Dorsolateral prefrontal cortex (tissue), 120 donors: ENCODE measurements at regions of chr10 and their contacts with region 1.

Region 1: DNA sequence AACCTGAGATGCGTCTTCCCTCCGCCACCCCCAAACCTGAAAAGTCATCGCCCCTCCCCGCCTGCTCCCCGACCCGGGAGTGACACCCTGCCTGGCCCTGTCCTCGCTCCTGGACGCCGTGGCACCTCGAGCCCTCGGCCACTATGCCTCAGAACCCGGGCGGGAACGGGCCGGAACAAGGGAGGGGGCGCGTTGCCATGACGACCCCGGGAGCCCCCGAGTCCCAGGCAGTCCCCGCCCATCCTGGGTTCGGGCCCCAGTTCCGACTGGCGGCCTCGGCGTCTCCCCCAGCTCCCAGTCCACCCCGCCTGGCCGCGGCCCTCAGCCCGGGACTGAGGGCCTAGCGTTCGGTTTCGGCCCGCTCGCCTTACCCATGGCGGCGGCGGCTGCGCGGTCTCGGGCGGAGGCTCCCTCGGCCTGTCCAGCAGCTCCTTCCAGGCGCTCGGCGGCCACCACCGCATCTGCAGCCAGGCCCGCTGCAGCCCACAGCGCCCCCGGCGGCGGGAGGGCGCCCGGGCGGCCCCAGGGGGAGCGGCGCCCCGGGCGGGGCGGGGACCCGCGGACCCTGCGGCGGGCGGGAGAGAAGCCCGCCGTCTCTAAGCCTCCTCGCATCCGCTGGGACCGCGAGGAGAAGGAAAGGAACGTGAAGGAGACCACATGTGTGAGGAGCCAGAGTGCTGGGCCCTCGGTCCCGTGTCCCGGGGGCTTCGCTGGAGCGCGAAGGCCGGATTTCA is at the start of gene RUFY2:
- DNase-seq: peak; percentile 60 to 88 (median 76)
- H3K4me3 ChIP-seq: peak within 1 kb of the TSS; percentile 67 to 99 (median 95)
- H3K27ac ChIP-seq: peak within 1 kb of the TSS; percentile 77 to 99 (median 97)
- H3K27me3 ChIP-seq: no peaks in the 10 kb centered on the region
- CTCF ChIP-seq: peak in 53 of 56 donors; percentile 5 to 97 (median 62)
- total RNA-seq, gene RUFY2: 64.5 to 128 (median 91.0) TPM

Region 2: GRCh38 chr10:67936416-67936815 is 470.6 kb before region 1 on chr10:
- intact Hi-C with region 1: no loop called
- DNase-seq: no peak
- H3K4me3 ChIP-seq: no peak overlapping the region
- H3K27ac ChIP-seq: no peak overlapping the region
- H3K27me3 ChIP-seq: no peaks in the 10 kb centered on the region
- CTCF ChIP-seq: no peak

Region 3: GRCh38 chr10:68231106-68231816 is 175.7 kb before region 1 on chr10:
- intact Hi-C with region 1: loop called in 1 of 2 experiments (anchors 2 kb)
- DNase-seq: peak; percentile 58 to 86 (median 70)
- H3K4me3 ChIP-seq: peak overlapping the region; percentile 54 to 91 (median 77)
- H3K27ac ChIP-seq: peak overlapping the region; percentile 50 to 94 (median 87)
- H3K27me3 ChIP-seq: no peaks in the 10 kb centered on the region
- CTCF ChIP-seq: peak in 40 of 56 donors; percentile 12 to 61 (median 36)

Region 4: GRCh38 chr10:68526626-68527307 is 119.8 kb after region 1 on chr10:
- intact Hi-C with region 1: loop called in 1 of 2 experiments (anchors 5 kb)
- DNase-seq: no peak
- H3K4me3 ChIP-seq: peak overlapping the region; percentile 79 to 100 (median 96)
- H3K27ac ChIP-seq: peak overlapping the region; percentile 63 to 97 (median 91)
- H3K27me3 ChIP-seq: no peaks in the 10 kb centered on the region
- CTCF ChIP-seq: no peak

Region 5: DNA sequence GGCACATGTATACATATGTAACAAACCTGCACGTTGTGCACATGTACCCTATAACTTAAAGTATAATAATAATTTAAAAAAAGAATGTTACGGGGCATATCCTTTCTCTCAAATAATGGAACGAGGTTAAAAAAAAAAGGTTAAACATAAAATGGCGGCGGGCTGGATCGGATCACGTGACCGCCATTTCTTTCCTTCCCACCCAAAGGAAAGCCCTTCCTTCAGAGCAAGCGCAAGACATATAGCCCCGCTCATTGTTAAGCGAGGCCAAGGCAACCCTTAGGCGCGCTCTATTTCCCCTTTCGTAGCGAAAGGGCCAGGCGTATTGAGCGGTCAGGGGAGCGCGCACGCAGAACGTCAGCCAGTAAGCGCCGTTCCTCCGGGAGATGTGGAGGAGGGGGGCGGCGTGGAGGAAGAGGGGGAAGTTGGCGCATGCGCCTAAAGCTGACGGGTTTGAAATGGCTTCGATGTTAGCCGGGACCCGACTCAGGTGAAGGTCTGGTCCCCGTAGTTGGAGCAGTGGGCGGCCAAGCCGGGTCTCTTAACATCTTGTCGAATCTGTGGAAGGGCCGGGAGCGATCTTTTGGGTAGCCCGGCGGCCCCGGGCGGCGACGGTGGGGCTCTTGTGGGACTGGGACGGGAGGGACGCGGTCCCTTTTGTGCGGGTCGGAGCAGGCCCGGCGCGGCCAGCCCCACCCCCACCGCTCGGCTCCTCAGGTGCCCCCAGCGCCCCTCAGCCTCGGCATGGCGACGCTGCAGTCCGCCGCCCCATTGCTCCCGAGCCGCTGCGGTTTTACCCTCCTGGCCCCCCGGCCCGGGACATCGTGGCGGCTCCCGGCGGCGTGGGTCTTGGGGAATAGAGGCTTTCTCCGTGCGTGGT is 314.1 kb after region 1 on chr10 and contains the start of gene CCAR1:
- intact Hi-C with region 1: loop called in 1 of 2 experiments (anchors 10 kb)
- DNase-seq: peak; percentile 93 to 97 (median 95)
- H3K4me3 ChIP-seq: peak within 1 kb of the TSS; percentile 67 to 100 (median 96)
- H3K27ac ChIP-seq: peak within 1 kb of the TSS; percentile 79 to 99 (median 97)
- H3K27me3 ChIP-seq: no peaks in the 10 kb centered on the region
- CTCF ChIP-seq: peak in 21 of 56 donors; percentile 9 to 49 (median 26)
- total RNA-seq, gene CCAR1: 43.8 to 95.7 (median 69.5) TPM